Posterior vena cava (tissue), 2 donors: ENCODE measurements at regions of chr11 and their contacts with region 1.

Region 1: DNA sequence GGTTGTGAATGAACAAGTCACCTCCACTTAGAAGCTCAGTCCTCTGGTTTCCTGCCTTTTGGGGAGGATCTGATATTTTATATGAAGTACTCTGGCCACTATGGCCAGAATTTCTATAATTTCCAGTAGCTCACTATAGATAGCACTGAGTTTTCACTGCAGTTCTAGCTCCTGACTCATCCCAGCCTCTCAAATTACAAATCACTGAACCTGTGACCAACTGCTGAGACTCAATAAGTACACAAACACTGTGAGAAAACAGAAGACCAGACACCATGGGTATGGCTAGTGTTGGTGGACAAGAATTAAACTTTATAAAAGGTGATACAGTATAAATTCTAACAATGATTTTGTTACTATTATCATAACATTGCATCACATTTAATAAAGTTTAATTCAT is 47.1 kb upstream of the UCP3 start:
- DNase-seq: no peak

Region 2: DNA sequence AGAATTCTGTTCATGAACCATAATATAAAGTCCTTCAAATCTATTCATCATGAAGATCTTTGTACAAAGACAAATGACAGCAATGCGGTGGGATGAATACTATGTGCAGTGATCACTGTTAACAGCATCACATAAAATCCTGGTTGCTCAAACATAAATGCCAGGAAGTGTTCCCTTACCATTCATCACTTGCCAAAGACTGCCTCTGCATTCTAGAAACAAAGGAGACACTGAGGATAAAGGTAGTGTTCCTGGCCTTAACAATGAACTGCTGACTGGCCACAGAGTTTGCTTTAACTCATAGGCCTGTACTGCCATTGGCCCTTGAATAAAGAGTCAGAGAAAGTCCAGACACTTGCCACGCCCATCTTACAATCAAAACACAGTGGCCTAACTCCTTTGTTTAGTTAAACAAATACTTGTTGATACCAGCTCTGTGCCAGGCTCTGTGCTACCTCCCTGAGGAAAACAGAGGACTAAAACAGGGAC is 85.3 kb after region 1 on chr11:
- intact Hi-C with region 1: no loop called
- DNase-seq: no peak

Region 3: DNA sequence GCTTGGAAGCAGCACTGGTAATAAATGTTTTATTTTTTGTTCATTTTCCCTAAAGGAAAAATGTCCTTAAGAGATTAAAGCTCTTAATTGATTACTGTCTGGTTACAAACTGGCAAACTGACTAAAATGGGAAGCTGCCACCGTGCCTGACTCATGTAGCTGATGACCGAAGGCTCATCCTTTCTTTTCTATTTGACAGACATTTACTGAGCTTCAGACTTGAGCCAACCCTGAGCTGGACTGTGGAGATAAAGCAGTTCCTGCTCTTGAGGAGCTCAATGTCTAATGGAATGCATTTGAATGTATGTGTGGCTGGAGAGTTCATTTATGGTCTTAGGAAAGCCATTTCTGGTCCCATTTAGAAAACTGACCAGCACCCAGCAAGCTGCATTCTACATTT is 784.0 kb after region 1 on chr11:
- intact Hi-C with region 1: loop called in 1 of 2 experiments (anchors 10 kb)
- DNase-seq: no peak